ENCODE measurements at regions of chr1 and their contacts with region 1.

Region 1: DNA sequence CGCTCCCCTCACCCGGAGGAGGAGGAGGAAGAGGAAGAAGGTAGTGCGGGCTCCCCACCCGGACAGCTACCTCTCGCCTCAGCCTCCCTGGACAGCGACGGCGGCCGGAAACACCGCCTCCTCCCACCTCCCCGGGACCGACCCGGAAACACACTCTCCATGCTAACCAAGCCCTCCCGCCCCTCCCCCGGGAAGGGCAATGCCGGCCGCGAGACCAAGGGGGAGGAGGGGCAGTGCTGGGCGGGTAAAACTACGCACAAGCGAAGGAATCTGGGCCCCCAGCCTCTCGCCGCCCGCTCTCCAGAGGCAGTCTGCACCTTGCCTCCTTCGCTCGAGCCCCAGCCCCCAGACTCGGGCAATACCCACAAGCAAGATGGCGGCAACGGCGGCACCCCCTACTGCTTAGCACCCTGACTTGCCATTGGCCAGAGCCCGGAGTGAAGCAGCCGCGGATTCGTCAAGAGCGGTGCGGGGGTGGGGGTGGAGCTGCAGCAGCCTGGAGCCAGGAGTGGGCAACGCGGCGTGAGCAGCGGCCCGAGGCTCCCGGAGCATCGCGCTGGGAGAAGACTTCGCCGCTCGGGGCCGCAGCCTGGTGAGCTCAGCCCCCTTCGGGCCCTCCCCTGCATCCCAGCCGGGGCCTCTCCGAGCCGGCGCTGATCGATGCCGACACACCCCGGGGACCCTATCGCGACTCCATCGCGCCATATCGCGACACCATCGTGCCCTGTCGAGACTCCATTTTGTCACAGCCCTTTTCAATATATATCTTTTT is at the starts of genes KIAA0319L and NCDN:
- DNase-seq: peak; percentile 97
- H3K4me3 ChIP-seq: peak within 1 kb of the TSS; percentile 46 to 59 (median 53)
- H3K27ac ChIP-seq: peak within 1 kb of the TSS; percentile 65
- H3K4me1 ChIP-seq: peaks cover 6% of the 10 kb centered on the region
- H3K27me3 ChIP-seq: no peaks in the 10 kb centered on the region
- CTCF ChIP-seq: no peak
- POLR2A ChIP-seq: peak; percentile 89
- total RNA-seq, gene KIAA0319L: 43.4 and 45.3 TPM in 2 replicates
- total RNA-seq, gene NCDN: 22.0 and 22.3 TPM in 2 replicates

Region 2: GRCh38 chr1:35505908-35506798 is 51.3 kb before region 1 on chr1:
- CTCF ChIA-PET with region 1: no interaction called
- POLR2A ChIA-PET with region 1: no interaction called
- dilution Hi-C with region 1: no loop called
- intact Hi-C with region 1: loop called (anchors 1 kb)
- DNase-seq: peak; percentile 98
- H3K4me3 ChIP-seq: no peak overlapping the region
- H3K27ac ChIP-seq: peak overlapping the region; percentile 48
- H3K4me1 ChIP-seq: peaks cover 22% of the 10 kb centered on the region
- H3K27me3 ChIP-seq: no peaks in the 10 kb centered on the region
- CTCF ChIP-seq: no peak
- POLR2A ChIP-seq: peak; percentile 50

Region 3: GRCh38 chr1:35629051-35629450 is 71.6 kb after region 1 on chr1:
- CTCF ChIA-PET with region 1: no interaction called
- POLR2A ChIA-PET with region 1: no interaction called
- dilution Hi-C with region 1: no loop called
- intact Hi-C with region 1: no loop called
- DNase-seq: no peak
- H3K4me3 ChIP-seq: no peak overlapping the region
- H3K27ac ChIP-seq: no peak overlapping the region
- H3K4me1 ChIP-seq: no peaks in the 10 kb centered on the region
- H3K27me3 ChIP-seq: no peaks in the 10 kb centered on the region
- CTCF ChIP-seq: no peak
- POLR2A ChIP-seq: no peak